AG04450 (cell line): ENCODE measurements at regions of chr14 and their contacts with region 1.

Region 1: GRCh38 chr14:22822571-22823098 is 7.1 kb upstream of the MRPL52 start:
- DNase-seq: peak; percentile 62
- H3K4me3 ChIP-seq: peak overlapping the region; percentile 34
- H3K27ac ChIP-seq: peak overlapping the region; percentile 65
- H3K27me3 ChIP-seq: no peaks in the 10 kb centered on the region
- CTCF ChIP-seq: peak; percentile 87

Region 2: GRCh38 chr14:22185191-22185590 is 637.4 kb before region 1 on chr14:
- CTCF ChIA-PET with region 1: interaction called, 10 read pairs
- POLR2A ChIA-PET with region 1: no interaction called
- DNase-seq: no peak
- H3K4me3 ChIP-seq: no peak overlapping the region
- H3K27ac ChIP-seq: no peak overlapping the region
- H3K27me3 ChIP-seq: no peaks in the 10 kb centered on the region
- CTCF ChIP-seq: peak; percentile 24; the same call in 1 of the 2 replicates

Region 3: GRCh38 chr14:22836301-22837113 is 13.9 kb after region 1 on chr14 and contains the start of gene MMP14:
- CTCF ChIA-PET with region 1: interaction called, 26 read pairs
- POLR2A ChIA-PET with region 1: interaction called, 35 read pairs
- DNase-seq: no peak
- H3K4me3 ChIP-seq: peak within 1 kb of the TSS; percentile 89
- H3K27ac ChIP-seq: peak within 1 kb of the TSS; percentile 94
- H3K27me3 ChIP-seq: no peaks in the 10 kb centered on the region
- CTCF ChIP-seq: peak; percentile 65
- polyA plus RNA-seq, gene MMP14: 365 and 448 TPM in 2 replicates

Region 4: GRCh38 chr14:22852940-22853767 is 30.5 kb after region 1 on chr14:
- CTCF ChIA-PET with region 1: interaction called, 217 read pairs
- POLR2A ChIA-PET with region 1: interaction called, 32 read pairs
- DNase-seq: no peak
- H3K4me3 ChIP-seq: peak overlapping the region; percentile 56
- H3K27ac ChIP-seq: peak overlapping the region; percentile 52
- H3K27me3 ChIP-seq: no peaks in the 10 kb centered on the region
- CTCF ChIP-seq: peak; percentile 91

Region 5: GRCh38 chr14:22872033-22872832 is 49.6 kb after region 1 on chr14:
- CTCF ChIA-PET with region 1: interaction called, 28 read pairs
- POLR2A ChIA-PET with region 1: no interaction called
- DNase-seq: peak; percentile 58
- H3K4me3 ChIP-seq: peak overlapping the region; percentile 80
- H3K27ac ChIP-seq: peak overlapping the region; percentile 91
- H3K27me3 ChIP-seq: no peaks in the 10 kb centered on the region
- CTCF ChIP-seq: peak; percentile 96